B cell (primary cell): ENCODE measurements at regions of chr2 and their contacts with region 1.

Region 1: GRCh38 chr2:96265840-96266679 is at the starts of genes CIAO1 and TMEM127:
- DNase-seq: peak; percentile 97
- ATAC-seq: peak; percentile 93
- H3K4me3 ChIP-seq: peak within 1 kb of the TSS; percentile 93 to 97 (median 95)
- H3K4me3 Mint-ChIP-seq: peak within 1 kb of the TSS; percentile 99
- H3K27ac ChIP-seq: peak within 1 kb of the TSS; percentile 82 to 85
- H3K27ac Mint-ChIP-seq: peak within 1 kb of the TSS; percentile 94
- H3K4me1 ChIP-seq: peaks cover 23 to 34% of the 10 kb centered on the region in 2 donors
- H3K4me1 Mint-ChIP-seq: peaks cover 45% of the 10 kb centered on the region
- H3K27me3 ChIP-seq: no peaks in the 10 kb centered on the region
- H3K27me3 Mint-ChIP-seq: no peaks in the 10 kb centered on the region
- CTCF ChIP-seq: peak; percentile 22
- total RNA-seq, gene CIAO1: 85.4 and 91.2 TPM in 2 replicates
- total RNA-seq, gene TMEM127: 48.0 and 48.5 TPM in 2 replicates

Region 2: DNA sequence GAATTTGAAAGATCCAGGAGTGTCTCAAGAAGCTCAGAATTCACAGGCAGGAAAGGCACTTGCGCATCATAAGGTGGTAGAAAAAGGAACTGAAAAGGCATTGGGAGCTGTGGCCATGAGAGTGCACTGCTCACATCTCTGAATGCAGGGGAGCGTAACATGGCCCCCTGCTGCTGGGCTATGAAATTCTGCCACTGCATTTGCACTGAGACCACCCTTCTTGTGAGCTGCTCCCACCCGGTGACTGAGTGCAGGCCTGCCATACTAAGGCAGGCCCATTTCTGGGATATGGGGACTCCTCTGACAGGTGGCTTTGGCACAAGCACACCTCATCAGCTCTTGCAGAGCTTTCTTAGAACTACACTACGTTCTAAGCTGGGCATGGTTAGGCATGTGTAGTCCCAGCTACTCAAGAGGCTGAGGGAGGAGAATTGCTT is 32.2 kb before region 1 on chr2:
- CTCF ChIA-PET with region 1: interaction called, 39 read pairs
- POLR2A ChIA-PET with region 1: interaction called, 3 read pairs
- intact Hi-C with region 1: no loop called
- DNase-seq: peak; percentile 70
- ATAC-seq: peak; percentile 98
- H3K4me3 ChIP-seq: no peak overlapping the region
- H3K4me3 Mint-ChIP-seq: peak overlapping the region; percentile 49
- H3K27ac ChIP-seq: no peak overlapping the region
- H3K27ac Mint-ChIP-seq: peak overlapping the region; percentile 88
- H3K4me1 ChIP-seq: peaks cover 15% of the 10 kb centered on the region in 2 donors
- H3K4me1 Mint-ChIP-seq: peaks cover 16% of the 10 kb centered on the region
- H3K27me3 ChIP-seq: no peaks in the 10 kb centered on the region
- H3K27me3 Mint-ChIP-seq: no peaks in the 10 kb centered on the region
- CTCF ChIP-seq: peak; percentile 41

Region 3: GRCh38 chr2:96254571-96254970 is 11.5 kb before region 1 on chr2:
- CTCF ChIA-PET with region 1: interaction called, 10 read pairs
- POLR2A ChIA-PET with region 1: interaction called, 6 read pairs
- intact Hi-C with region 1: no loop called
- DNase-seq: no peak
- ATAC-seq: no peak
- H3K4me3 ChIP-seq: no peak overlapping the region
- H3K4me3 Mint-ChIP-seq: no peak overlapping the region
- H3K27ac ChIP-seq: peak overlapping the region in 1 of 2 donors; percentile 64
- H3K27ac Mint-ChIP-seq: peak overlapping the region; percentile 59
- H3K4me1 ChIP-seq: peaks cover 47 to 53% of the 10 kb centered on the region in 2 donors
- H3K4me1 Mint-ChIP-seq: peaks cover 46% of the 10 kb centered on the region
- H3K27me3 ChIP-seq: no peaks in the 10 kb centered on the region
- H3K27me3 Mint-ChIP-seq: no peaks in the 10 kb centered on the region
- CTCF ChIP-seq: no peak

Region 4: DNA sequence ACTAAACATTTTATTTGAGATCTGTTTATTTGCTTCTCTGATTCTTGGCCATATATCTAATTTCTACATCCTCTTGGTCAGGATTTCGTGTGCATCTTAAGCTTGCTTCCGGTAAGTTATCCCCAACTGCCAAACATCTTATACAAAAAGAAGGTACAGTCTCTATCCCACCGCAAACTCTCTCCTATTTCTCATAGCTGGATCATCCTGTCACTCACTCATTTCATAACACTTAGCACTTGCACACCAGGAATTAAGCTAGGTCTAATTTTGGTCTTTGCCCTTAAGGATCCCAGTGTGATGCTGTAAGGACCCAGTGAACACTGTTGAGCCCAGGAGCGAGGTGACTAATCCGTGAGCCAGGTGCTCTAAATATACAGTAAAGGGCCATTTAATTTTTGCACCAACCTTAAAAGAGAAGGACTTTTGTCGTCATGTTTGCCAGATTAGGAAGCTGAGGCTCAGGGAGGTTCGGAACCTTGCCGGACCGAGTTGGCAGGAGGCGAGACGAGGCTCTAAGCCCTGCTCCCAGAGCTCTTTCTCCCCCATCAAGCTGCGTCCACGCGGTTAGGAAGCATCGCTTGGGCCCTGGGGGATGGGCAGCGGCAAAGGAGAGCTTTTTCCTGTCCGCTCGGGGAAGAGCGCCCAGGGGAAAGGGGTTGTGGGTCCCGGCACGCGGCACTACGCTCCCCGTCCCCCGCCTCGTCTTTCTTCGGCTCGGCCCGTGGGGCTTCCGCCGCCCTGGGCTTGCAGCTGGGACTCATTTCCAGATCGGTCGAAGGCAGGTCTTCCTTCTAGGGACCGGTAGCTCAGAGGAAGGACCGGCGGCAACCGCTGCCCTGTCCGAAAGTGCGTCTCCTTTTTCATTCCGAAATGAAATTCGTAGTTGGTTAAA is 54.9 kb after region 1 on chr2:
- CTCF ChIA-PET with region 1: interaction called, 4 read pairs
- POLR2A ChIA-PET with region 1: no interaction called
- intact Hi-C with region 1: loop called (anchors 1 kb)
- DNase-seq: no peak
- ATAC-seq: peak; percentile 9
- H3K4me3 ChIP-seq: peak overlapping the region; percentile 76 to 97 (median 79)
- H3K4me3 Mint-ChIP-seq: peak overlapping the region; percentile 87
- H3K27ac ChIP-seq: peak overlapping the region; percentile 34 to 68
- H3K27ac Mint-ChIP-seq: peak overlapping the region; percentile 84
- H3K4me1 ChIP-seq: peaks cover 33 to 43% of the 10 kb centered on the region in 2 donors
- H3K4me1 Mint-ChIP-seq: peaks cover 49% of the 10 kb centered on the region
- H3K27me3 ChIP-seq: no peaks in the 10 kb centered on the region
- H3K27me3 Mint-ChIP-seq: no peaks in the 10 kb centered on the region
- CTCF ChIP-seq: no peak

Region 5: DNA sequence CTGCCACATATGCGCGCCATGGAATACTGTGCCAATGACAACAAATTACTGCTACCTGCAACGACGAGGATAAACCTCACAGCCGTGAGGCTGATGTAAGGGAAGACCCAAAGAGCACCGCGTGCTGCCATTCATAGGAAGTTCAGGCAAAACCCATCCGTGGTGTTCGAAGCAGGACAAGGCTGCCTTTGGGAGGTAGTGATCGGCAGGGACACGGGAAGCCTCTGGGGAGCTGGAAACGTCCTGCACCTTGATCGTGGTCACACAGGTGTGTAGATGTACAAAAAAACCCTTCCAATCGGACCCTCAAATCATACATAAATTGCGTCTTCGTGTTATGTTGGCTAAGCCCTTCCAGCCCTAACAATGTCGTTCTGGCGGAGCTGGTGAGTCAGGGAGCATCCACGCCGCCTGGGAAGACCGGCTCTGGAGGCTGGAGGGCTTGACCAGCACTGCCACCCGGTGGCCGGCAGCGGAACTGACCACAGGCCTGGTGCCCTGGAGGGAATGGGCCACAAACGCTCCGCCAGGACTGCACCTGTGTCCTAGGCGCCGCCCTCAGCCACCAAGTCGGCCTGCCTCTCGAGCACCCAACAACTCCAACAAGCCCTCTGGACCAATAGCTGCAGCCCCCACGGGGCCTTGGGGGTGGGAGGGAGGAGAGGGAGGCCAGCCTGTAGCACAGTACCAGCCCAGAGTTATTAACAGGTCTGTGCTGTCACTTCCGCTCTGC is 243.2 kb after region 1 on chr2:
- CTCF ChIA-PET with region 1: interaction called, 6 read pairs
- POLR2A ChIA-PET with region 1: no interaction called
- intact Hi-C with region 1: loop called (anchors 2 kb)
- DNase-seq: peak; percentile 78
- ATAC-seq: peak; percentile 67
- H3K4me3 ChIP-seq: no peak overlapping the region
- H3K4me3 Mint-ChIP-seq: peak overlapping the region; percentile 78
- H3K27ac ChIP-seq: no peak overlapping the region
- H3K27ac Mint-ChIP-seq: no peak overlapping the region
- H3K4me1 ChIP-seq: peaks cover 18 to 23% of the 10 kb centered on the region in 2 donors
- H3K4me1 Mint-ChIP-seq: peaks cover 18% of the 10 kb centered on the region
- H3K27me3 ChIP-seq: peaks cover 0 to 16% (median 0%) of the 10 kb centered on the region in 4 experiments
- H3K27me3 Mint-ChIP-seq: peaks cover 14% of the 10 kb centered on the region
- CTCF ChIP-seq: peak; percentile 75